ENCODE measurements at regions of chr11 and their contacts with region 1.

Region 1: GRCh38 chr11:12137938-12138731 is 27.7 kb downstream of the MICAL2 start:
- DNase-seq: peak; percentile 98
- ATAC-seq: peak; percentile 60
- H3K4me3 ChIP-seq: no peak overlapping the region
- H3K27ac ChIP-seq: peak overlapping the region; percentile 70
- H3K4me1 ChIP-seq: peaks cover 51% of the 10 kb centered on the region
- H3K27me3 ChIP-seq: no peaks in the 10 kb centered on the region
- CTCF ChIP-seq: no peak; the same call in 1 of the 2 replicates
- POLR2A ChIP-seq: peak; percentile 60
- RAD21 ChIP-seq: peak; percentile 12

Region 2: DNA sequence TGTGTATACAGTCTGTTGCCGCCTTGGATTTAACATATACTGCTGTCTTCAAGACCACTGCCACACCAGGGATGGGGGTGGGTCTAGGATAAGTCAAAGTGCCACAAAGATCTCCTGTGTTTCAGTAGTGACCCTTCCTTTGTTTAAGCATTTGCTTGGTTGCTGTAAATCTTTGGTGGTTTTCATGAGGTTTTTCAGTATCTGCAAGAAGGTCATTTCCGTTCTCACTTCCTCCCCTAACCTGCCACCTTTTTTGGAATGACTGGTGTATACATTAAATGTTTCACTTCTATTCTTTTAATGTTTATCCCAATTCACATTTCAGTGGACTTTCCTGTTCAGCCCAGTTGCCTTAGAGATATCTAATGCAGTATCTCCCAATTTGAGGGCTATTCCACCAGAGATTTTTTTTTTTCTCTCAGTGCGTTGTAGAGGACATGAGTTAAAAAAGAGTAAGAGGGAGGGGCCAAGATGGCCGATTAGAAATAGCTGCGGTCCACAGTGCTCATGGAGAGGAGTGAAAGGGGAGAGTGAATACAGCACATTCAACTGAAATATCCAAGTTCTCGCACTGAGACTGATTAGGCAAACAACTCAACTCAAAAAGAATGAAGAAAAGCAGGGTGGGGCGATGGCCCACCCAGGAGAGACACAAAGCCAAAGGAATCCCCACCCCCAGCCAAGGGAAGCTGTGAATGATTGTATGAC is 253.2 kb before region 1 on chr11:
- CTCF ChIA-PET with region 1: no interaction called
- POLR2A ChIA-PET with region 1: no interaction called
- dilution Hi-C with region 1: no loop called
- in situ Hi-C with region 1: no loop called
- intact Hi-C with region 1: no loop called
- DNase-seq: no peak
- ATAC-seq: no peak
- H3K4me3 ChIP-seq: no peak overlapping the region
- H3K27ac ChIP-seq: no peak overlapping the region
- H3K4me1 ChIP-seq: no peaks in the 10 kb centered on the region
- H3K27me3 ChIP-seq: no peaks in the 10 kb centered on the region
- CTCF ChIP-seq: no peak
- POLR2A ChIP-seq: no peak
- RAD21 ChIP-seq: no peak

Region 3: DNA sequence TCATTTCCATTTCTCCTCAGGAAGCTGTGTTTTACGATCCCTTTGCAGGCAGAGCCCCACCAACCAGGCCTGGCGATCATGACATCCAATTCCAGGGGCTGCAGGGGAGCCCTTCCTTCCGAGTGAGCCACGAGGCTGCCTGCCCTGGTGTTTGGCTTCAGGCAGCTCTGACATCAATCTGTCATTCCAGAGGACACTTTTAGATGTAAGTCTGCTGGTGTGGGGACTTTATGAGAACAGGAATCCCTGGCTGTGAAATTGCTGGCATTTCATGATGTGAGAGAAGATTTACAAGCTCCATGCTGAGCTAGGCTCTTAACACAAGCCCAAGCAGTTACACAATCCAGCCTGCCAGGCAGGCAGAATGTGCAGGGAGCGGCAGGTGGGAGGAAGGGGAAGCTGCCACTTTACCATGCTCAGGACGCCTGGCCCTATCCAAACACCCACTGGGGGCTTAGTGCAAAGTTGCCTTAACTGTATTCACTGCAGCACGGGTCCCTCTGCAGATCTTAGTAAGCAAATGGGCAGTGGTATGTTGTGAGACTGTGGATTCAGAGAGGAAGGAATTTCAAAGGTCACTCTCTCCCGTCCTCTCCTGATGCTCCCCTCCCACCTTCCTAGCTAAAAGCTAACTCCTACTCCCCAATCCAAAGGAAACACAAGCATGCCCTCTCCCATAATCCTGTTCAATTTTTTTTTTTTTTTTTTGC is 71.2 kb before region 1 on chr11:
- CTCF ChIA-PET with region 1: no interaction called
- POLR2A ChIA-PET with region 1: no interaction called
- dilution Hi-C with region 1: no loop called
- in situ Hi-C with region 1: no loop called
- intact Hi-C with region 1: no loop called
- DNase-seq: peak; percentile 56
- ATAC-seq: peak; percentile 63
- H3K4me3 ChIP-seq: no peak overlapping the region
- H3K27ac ChIP-seq: peak overlapping the region; percentile 86
- H3K4me1 ChIP-seq: peaks cover 20% of the 10 kb centered on the region
- H3K27me3 ChIP-seq: no peaks in the 10 kb centered on the region
- CTCF ChIP-seq: no peak
- POLR2A ChIP-seq: peak; percentile 40; the same call in 1 of the 2 replicates
- RAD21 ChIP-seq: no peak

Region 4: GRCh38 chr11:12159351-12160099 is 21.4 kb after region 1 on chr11:
- CTCF ChIA-PET with region 1: no interaction called
- POLR2A ChIA-PET with region 1: no interaction called
- dilution Hi-C with region 1: no loop called
- in situ Hi-C with region 1: no loop called
- intact Hi-C with region 1: loop called (anchors 2 kb)
- DNase-seq: peak; percentile 97
- ATAC-seq: peak; percentile 82
- H3K4me3 ChIP-seq: no peak overlapping the region
- H3K27ac ChIP-seq: peak overlapping the region; percentile 83
- H3K4me1 ChIP-seq: peaks cover 53% of the 10 kb centered on the region
- H3K27me3 ChIP-seq: no peaks in the 10 kb centered on the region
- CTCF ChIP-seq: peak; percentile 32; the same call in 1 of the 2 replicates
- POLR2A ChIP-seq: peak; percentile 76
- RAD21 ChIP-seq: peak; percentile 55